ENCODE measurements at regions of chr18 and their contacts with region 1.

Region 1: GRCh38 chr18:23828426-23828825 is 139.2 kb downstream of the LAMA3 start:
- DNase-seq: peak; percentile 53
- H3K4me3 ChIP-seq: no peak overlapping the region
- H3K27ac ChIP-seq: no peak overlapping the region
- H3K4me1 ChIP-seq: peaks cover 14% of the 10 kb centered on the region
- CTCF ChIP-seq: no peak

Region 2: DNA sequence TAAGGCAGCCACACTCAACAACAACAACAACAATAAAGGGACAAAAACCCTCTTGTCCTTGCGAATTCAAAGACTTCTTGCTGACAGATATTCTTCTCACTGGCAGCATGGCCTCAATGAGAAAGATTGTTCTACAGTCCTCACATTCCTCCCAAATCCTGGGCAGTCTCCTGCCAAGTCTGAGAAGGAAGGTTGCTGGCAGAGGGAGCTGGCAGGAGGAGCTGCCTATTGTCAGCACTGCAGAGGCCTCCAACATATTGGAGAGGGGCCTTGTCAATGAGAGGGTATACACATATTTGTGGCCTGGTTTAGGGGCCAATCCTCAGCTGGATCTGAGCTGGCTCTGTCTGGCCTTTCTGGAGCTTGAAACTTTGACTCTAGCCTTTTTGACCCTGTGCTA is 75.6 kb before region 1 on chr18:
- CTCF ChIA-PET with region 1: no interaction called
- POLR2A ChIA-PET with region 1: no interaction called
- intact Hi-C with region 1: no loop called
- DNase-seq: no peak
- H3K4me3 ChIP-seq: no peak overlapping the region
- H3K27ac ChIP-seq: no peak overlapping the region
- H3K4me1 ChIP-seq: no peaks in the 10 kb centered on the region
- CTCF ChIP-seq: no peak

Region 3: GRCh38 chr18:24039671-24040070 is 211.2 kb after region 1 on chr18:
- CTCF ChIA-PET with region 1: no interaction called
- POLR2A ChIA-PET with region 1: no interaction called
- intact Hi-C with region 1: no loop called
- DNase-seq: no peak
- H3K4me3 ChIP-seq: no peak overlapping the region
- H3K27ac ChIP-seq: no peak overlapping the region
- H3K4me1 ChIP-seq: no peaks in the 10 kb centered on the region
- CTCF ChIP-seq: no peak

Region 4: DNA sequence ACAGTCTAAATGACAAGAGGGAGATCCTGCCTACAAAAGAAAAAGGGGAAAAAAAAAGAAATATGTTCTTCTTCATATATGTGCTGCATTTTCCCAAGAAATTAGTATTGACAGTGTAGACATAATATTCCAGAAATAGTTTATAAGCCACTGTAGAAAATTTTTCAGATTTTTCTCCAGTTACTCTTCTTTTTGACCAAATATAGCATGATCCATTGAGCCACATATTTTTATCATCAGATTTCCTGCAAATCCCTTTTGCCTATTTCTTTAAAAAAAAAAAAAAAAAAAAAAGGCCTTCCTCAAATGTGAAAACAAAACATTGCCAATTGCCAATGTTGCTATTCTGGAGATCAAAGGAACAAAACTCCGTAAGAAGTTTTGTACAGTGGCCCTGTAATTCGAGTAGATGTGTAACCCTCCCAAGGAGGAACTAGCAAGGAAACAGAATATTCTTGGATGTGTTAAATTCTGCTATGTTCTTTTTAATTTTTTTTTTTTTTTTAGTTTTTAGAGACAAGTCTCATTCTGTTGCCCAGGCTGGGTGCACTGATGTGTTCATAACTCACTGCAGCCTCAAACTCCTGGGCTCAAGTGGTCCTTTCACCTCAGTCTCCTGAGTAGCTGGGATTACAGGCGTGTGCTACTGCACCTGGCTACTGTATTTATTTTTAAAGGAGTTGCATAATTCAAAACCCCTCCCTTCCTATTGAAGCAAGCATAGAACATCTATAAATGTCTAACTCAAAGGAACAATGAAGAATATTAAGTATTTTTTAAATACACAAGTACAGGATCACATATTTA is 297.9 kb after region 1 on chr18:
- CTCF ChIA-PET with region 1: no interaction called
- POLR2A ChIA-PET with region 1: no interaction called
- intact Hi-C with region 1: loop called (anchors 10 kb)
- DNase-seq: no peak
- H3K4me3 ChIP-seq: no peak overlapping the region
- H3K27ac ChIP-seq: no peak overlapping the region
- H3K4me1 ChIP-seq: no peaks in the 10 kb centered on the region
- CTCF ChIP-seq: no peak

Measured in OCI-LY7 (cell line).